Naive thymus-derived CD8-positive, alpha-beta T cell (primary cell): ENCODE measurements at regions of chr6 and their contacts with region 1.

Region 1: DNA sequence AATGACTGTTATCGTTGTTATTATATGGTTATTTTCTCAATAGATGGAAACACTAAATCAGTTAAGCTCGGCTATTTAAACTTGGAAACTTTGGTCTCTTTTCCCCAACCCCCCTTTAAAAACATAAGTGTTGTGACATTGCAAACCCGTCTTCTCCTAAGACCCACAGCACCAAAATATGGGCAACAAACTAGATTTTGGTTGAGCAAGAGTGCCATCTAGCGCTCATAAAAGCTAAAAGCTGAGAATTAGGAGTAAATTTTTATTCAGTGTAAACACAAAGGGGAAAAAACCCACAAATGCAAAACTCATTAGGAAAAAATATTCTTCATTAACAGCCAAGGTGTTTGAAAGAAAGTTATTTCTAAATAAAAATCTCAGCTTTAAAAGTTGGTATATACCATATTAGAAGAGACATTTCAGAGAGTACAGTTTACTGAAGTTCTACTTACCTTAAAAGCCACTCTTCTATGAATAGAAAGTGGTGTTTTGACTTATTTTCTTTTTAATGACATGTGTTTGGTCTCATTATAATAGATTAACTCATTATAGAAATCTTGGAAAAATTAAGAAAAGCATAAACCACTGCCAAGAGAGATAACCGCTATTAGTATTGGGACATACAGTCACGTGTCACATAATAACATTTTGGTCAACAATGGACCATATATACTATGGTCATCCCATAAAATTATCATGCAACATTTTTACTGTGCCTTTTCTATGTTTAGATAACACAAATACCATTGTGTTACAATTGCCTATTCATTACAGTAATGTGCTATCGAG is 21.1 kb downstream of the SESN1 start:
- DNase-seq: peak in 9 of 10 donors; percentile 27 to 77 (median 65)
- ATAC-seq: peak; percentile 63 to 73
- H3K4me3 Mint-ChIP-seq: peak overlapping the region in 6 of 10 donors; percentile 1 to 28 (median 2)
- H3K27ac Mint-ChIP-seq: peak overlapping the region in 3 of 10 donors; percentile 7 to 53 (median 9)
- H3K4me1 Mint-ChIP-seq: peaks cover 10 to 41% (median 25%) of the 10 kb centered on the region in 4 donors
- H3K27me3 Mint-ChIP-seq: no peaks in the 10 kb centered on the region

Region 2: DNA sequence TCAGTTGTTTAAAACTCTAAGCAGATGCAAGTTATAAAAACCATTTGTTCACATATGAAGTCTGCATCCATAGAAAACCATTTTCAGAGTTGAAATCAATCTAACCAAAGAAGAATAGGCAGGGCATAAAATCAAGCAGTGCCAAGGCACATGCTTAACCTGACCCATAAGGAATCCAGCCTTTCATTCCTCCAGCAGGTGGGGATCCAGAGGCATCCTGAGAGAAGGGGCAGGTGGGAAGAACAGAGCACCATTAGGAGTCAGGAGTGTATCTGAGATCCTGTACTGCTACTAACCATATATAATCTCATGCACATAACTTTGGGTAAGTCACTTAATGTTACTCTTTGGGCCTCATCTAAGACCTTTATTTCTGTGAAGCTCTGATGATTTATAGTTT is 542.2 kb before region 1 on chr6:
- POLR2A ChIA-PET with region 1: interaction called, 10 read pairs
- DNase-seq: no peak
- ATAC-seq: no peak
- H3K4me3 Mint-ChIP-seq: no peak overlapping the region
- H3K27ac Mint-ChIP-seq: no peak overlapping the region
- H3K4me1 Mint-ChIP-seq: no peaks in the 10 kb centered on the region
- H3K27me3 Mint-ChIP-seq: no peaks in the 10 kb centered on the region

Region 3: GRCh38 chr6:108541838-108542759 is 531.4 kb before region 1 on chr6:
- POLR2A ChIA-PET with region 1: interaction called, 10 read pairs
- DNase-seq: peak; percentile 49 to 86 (median 68)
- ATAC-seq: peak; percentile 81 to 93
- H3K4me3 Mint-ChIP-seq: peak overlapping the region in 8 of 10 donors; percentile 8 to 67 (median 50)
- H3K27ac Mint-ChIP-seq: peak overlapping the region in 2 of 10 donors; percentile 44 to 53
- H3K4me1 Mint-ChIP-seq: peaks cover 9 to 23% (median 18%) of the 10 kb centered on the region in 4 donors
- H3K27me3 Mint-ChIP-seq: peaks cover 0 to 11% (median 2%) of the 10 kb centered on the region in 5 donors

Region 4: GRCh38 chr6:108848116-108848868 is 225.2 kb before region 1 on chr6 and contains the start of gene ARMC2:
- POLR2A ChIA-PET with region 1: interaction called, 11 read pairs
- DNase-seq: peak; percentile 72 to 94 (median 84)
- ATAC-seq: peak; percentile 80 to 89
- H3K4me3 Mint-ChIP-seq: peak within 1 kb of the TSS; percentile 84 to 92 (median 90)
- H3K27ac Mint-ChIP-seq: peak within 1 kb of the TSS; percentile 76 to 95 (median 91)
- H3K4me1 Mint-ChIP-seq: peaks cover 10 to 33% (median 15%) of the 10 kb centered on the region in 4 donors
- H3K27me3 Mint-ChIP-seq: no peaks in the 10 kb centered on the region
- polyA plus RNA-seq, gene ARMC2: 2.4 to 4.9 (median 2.8) TPM

Region 5: GRCh38 chr6:108988296-108988695 is 85.2 kb before region 1 on chr6:
- POLR2A ChIA-PET with region 1: no interaction called
- DNase-seq: no peak
- ATAC-seq: no peak
- H3K4me3 Mint-ChIP-seq: no peak overlapping the region
- H3K27ac Mint-ChIP-seq: no peak overlapping the region
- H3K4me1 Mint-ChIP-seq: peaks cover 0 to 2% (median 0%) of the 10 kb centered on the region in 4 donors
- H3K27me3 Mint-ChIP-seq: no peaks in the 10 kb centered on the region

Region 6: GRCh38 chr6:109299776-109300564 is 226.4 kb after region 1 on chr6:
- POLR2A ChIA-PET with region 1: no interaction called
- DNase-seq: no peak
- ATAC-seq: no peak
- H3K4me3 Mint-ChIP-seq: no peak overlapping the region
- H3K27ac Mint-ChIP-seq: no peak overlapping the region
- H3K4me1 Mint-ChIP-seq: peaks cover 0 to 20% (median 0%) of the 10 kb centered on the region in 4 donors
- H3K27me3 Mint-ChIP-seq: peaks cover 0 to 9% (median 6%) of the 10 kb centered on the region in 5 donors